Common myeloid progenitor, CD34-positive (primary cell): ENCODE measurements at regions of chr2 and their contacts with region 1.

Region 1: DNA sequence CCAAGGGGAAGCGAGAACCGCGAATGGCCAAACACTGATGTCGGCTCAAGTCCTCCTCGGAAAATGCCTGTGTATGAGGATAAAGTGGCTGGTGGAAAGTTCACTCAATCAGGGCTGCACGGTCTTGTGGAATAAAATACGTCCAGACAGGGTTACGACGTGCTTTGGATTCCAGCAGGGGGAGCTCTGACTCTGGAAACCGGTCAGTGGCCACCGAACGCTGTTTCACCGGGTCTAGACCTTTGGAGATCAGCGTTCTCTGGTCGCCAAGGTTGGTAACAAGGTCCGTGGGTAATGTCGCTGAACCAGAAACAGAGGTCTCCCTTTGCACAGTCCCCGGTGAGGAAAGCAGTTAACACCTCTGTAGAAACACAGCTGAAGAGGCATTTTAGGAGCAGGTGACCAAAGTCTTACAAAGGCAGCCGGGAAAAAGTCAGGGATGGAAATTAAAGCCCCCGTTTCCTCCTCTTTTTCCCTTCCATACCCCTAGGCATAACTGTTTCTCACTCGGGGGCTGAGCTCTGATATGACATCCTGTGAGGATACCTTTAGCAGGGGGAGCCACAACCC is 47.8 kb downstream of the CDCA7 start:
- DNase-seq: peak; percentile 81 to 90 (median 84)
- H3K4me3 ChIP-seq: no peak overlapping the region
- H3K27ac ChIP-seq: no peak overlapping the region
- H3K4me1 ChIP-seq: peaks cover 0 to 5% (median 1%) of the 10 kb centered on the region in 4 experiments
- H3K27me3 ChIP-seq: peaks cover 15 to 57% (median 19%) of the 10 kb centered on the region in 5 experiments

Region 2: DNA sequence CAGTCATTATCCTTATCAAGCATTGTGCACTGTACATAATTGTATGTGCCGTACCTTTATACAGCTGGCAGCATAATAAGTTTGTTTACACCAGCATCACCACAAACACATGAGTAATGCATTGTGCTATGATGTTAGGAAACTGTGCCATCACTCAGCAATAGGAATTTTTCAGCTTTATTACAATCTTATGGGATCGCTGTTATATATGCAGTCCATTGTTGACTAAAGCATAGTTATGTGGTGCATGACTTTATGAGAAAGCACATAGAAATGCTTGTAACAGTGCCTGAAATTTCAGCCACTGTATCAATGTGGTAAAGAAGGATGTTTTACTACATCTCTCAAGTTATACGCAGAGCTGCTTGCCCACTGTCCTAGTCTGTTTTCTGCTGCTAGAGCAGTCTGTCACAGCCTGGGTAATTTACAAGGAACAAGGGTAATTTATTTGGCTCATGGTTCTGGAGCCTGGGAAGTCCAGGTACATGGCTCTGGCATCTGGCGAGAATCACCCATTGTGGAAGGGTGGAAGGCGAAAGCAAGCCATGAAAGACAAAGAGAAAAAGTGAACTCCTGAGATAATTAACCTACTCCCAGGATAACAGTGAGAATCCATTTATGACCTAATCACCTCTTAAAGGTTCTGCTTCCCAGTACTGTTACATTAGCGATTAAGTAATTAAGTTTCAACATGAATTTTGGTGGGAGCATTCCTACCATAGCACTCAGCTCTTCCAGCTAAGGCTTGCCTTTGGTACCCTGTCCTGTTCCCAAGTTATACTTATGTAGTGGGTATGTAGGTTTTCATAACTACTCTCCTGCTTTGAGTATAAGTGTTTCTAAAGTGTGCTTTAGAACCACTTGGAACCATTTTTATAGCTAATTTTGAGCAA is 322.3 kb before region 1 on chr2:
- CTCF ChIA-PET with region 1: no interaction called
- POLR2A ChIA-PET with region 1: no interaction called
- DNase-seq: no peak
- H3K4me3 ChIP-seq: no peak overlapping the region
- H3K27ac ChIP-seq: no peak overlapping the region
- H3K4me1 ChIP-seq: peaks cover 2 to 20% (median 12%) of the 10 kb centered on the region in 4 experiments
- H3K27me3 ChIP-seq: no peaks in the 10 kb centered on the region

Region 3: DNA sequence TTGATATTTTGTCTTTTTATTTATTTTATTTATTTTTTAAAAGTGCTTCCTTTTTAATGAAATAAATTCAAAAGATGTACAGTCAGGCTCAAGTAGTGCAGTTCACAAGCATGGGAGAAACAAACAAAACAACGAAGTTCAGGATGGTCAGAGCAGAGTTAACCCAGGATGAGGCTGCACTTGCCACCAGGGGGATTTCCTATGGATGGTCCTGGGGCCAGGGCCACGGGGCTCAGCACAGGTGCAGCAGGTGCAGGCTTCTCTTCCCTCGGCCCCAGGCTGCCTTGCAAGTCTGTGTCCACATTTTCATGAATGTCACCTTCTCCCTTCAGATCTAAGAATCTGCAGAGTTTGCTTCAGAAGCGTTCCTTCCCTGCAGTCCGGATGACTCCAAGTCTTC is 28.7 kb after region 1 on chr2:
- CTCF ChIA-PET with region 1: interaction called, 10 read pairs
- POLR2A ChIA-PET with region 1: no interaction called
- DNase-seq: no peak
- H3K4me3 ChIP-seq: no peak overlapping the region
- H3K27ac ChIP-seq: no peak overlapping the region
- H3K4me1 ChIP-seq: peaks cover 3 to 9% (median 5%) of the 10 kb centered on the region in 4 experiments
- H3K27me3 ChIP-seq: no peaks in the 10 kb centered on the region

Region 4: GRCh38 chr2:173568054-173568453 is 165.6 kb after region 1 on chr2:
- CTCF ChIA-PET with region 1: interaction called, 15 read pairs
- POLR2A ChIA-PET with region 1: no interaction called
- DNase-seq: peak; percentile 23 to 37 (median 36)
- H3K4me3 ChIP-seq: no peak overlapping the region
- H3K27ac ChIP-seq: no peak overlapping the region
- H3K4me1 ChIP-seq: peaks cover 0 to 8% (median 3%) of the 10 kb centered on the region in 4 experiments
- H3K27me3 ChIP-seq: peaks cover 0 to 4% (median 0%) of the 10 kb centered on the region in 5 experiments

Region 5: GRCh38 chr2:174341286-174341994 is 939.0 kb after region 1 on chr2:
- CTCF ChIA-PET with region 1: interaction called, 30 read pairs
- POLR2A ChIA-PET with region 1: no interaction called
- DNase-seq: peak; percentile 89 to 95 (median 93)
- H3K4me3 ChIP-seq: peak overlapping the region in 3 of 7 experiments; percentile 4 to 53 (median 14)
- H3K27ac ChIP-seq: no peak overlapping the region
- H3K4me1 ChIP-seq: peaks cover 0 to 51% (median 36%) of the 10 kb centered on the region in 4 experiments
- H3K27me3 ChIP-seq: peaks cover 39 to 100% (median 57%) of the 10 kb centered on the region in 5 experiments